OCI-LY7 (cell line): ENCODE measurements at regions of chr3 and their contacts with region 1.

Region 1: GRCh38 chr3:19348929-19349564 is 200.7 kb downstream of the KCNH8 start:
- DNase-seq: peak; percentile 77
- H3K4me3 ChIP-seq: no peak overlapping the region
- H3K27ac ChIP-seq: peak overlapping the region; percentile 61
- H3K4me1 ChIP-seq: peaks cover 47% of the 10 kb centered on the region
- CTCF ChIP-seq: peak; percentile 93

Region 2: GRCh38 chr3:19030522-19030839 is 318.6 kb before region 1 on chr3:
- CTCF ChIA-PET with region 1: no interaction called
- POLR2A ChIA-PET with region 1: no interaction called
- intact Hi-C with region 1: no loop called
- DNase-seq: peak; percentile 13
- H3K4me3 ChIP-seq: no peak overlapping the region
- H3K27ac ChIP-seq: no peak overlapping the region
- H3K4me1 ChIP-seq: no peaks in the 10 kb centered on the region
- CTCF ChIP-seq: peak; percentile 69

Region 3: DNA sequence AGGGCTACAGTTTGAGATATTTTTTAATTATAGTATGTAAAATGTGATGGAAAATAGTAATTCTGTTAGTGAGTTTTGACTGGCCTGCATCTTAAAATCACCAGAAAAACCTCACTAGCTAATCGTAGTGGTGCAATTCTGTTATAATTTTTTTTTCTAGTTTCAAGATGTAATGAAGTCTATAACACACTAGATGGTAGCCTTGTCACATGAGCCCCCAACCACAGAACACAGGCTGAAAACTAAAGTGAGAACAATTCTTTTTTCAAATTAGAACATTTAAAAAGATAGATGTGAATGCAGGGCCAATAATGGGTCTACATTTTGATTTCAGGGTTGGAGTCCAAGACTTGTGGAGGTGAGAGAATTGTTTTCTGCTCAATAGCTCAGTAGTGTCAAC is 284.0 kb before region 1 on chr3:
- CTCF ChIA-PET with region 1: no interaction called
- POLR2A ChIA-PET with region 1: no interaction called
- intact Hi-C with region 1: loop called (anchors 1 kb)
- DNase-seq: peak; percentile 36
- H3K4me3 ChIP-seq: no peak overlapping the region
- H3K27ac ChIP-seq: no peak overlapping the region
- H3K4me1 ChIP-seq: no peaks in the 10 kb centered on the region
- CTCF ChIP-seq: peak; percentile 83

Region 4: GRCh38 chr3:19146685-19147650 is 202.1 kb before region 1 on chr3:
- CTCF ChIA-PET with region 1: interaction called, 3 read pairs
- POLR2A ChIA-PET with region 1: interaction called, 4 read pairs
- intact Hi-C with region 1: loop called (anchors 5 kb)
- DNase-seq: peak; percentile 91
- H3K4me3 ChIP-seq: peak overlapping the region; percentile 72
- H3K27ac ChIP-seq: peak overlapping the region; percentile 68
- H3K4me1 ChIP-seq: peaks cover 11% of the 10 kb centered on the region
- CTCF ChIP-seq: peak; percentile 76

Region 5: GRCh38 chr3:19364148-19364547 is 15.1 kb after region 1 on chr3:
- CTCF ChIA-PET with region 1: no interaction called
- POLR2A ChIA-PET with region 1: interaction called, 18 read pairs
- intact Hi-C with region 1: no loop called
- DNase-seq: no peak
- H3K4me3 ChIP-seq: no peak overlapping the region
- H3K27ac ChIP-seq: no peak overlapping the region
- H3K4me1 ChIP-seq: peaks cover 14% of the 10 kb centered on the region
- CTCF ChIP-seq: no peak

Region 6: GRCh38 chr3:19399836-19400235 is 50.8 kb after region 1 on chr3:
- CTCF ChIA-PET with region 1: no interaction called
- POLR2A ChIA-PET with region 1: no interaction called
- intact Hi-C with region 1: loop called (anchors 10 kb)
- DNase-seq: no peak
- H3K4me3 ChIP-seq: no peak overlapping the region
- H3K27ac ChIP-seq: no peak overlapping the region
- H3K4me1 ChIP-seq: no peaks in the 10 kb centered on the region
- CTCF ChIP-seq: no peak

Region 7: DNA sequence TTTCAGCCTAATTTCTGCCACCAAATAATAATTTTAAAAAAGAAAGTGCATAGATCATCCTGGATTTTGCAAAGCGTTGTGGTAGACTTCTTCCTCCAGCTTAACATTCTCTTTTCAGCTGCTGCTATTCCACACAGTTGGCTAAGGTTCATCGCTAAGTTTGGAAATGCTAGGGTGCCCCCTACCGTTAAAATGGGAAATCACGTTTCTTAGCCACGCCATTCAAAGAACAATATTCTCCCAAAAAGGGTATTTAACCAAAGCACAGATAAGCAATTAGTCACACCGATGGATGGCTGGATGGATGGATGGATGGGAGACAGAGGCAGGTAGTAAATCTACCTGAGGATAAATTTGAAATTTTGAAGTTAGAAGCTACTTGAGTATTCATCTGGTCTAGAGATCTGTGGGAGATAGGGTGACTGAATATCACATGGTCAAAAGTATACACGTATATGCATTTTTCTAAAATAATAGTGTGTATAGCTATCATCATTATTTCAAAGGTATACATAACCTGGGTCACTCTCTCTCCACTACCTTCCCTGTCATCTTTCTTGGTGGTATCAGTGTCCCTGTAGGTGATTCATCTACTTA is 517.8 kb after region 1 on chr3:
- CTCF ChIA-PET with region 1: interaction called, 5 read pairs
- POLR2A ChIA-PET with region 1: interaction called, 6 read pairs
- intact Hi-C with region 1: loop called (anchors 1 kb)
- DNase-seq: peak; percentile 63
- H3K4me3 ChIP-seq: no peak overlapping the region
- H3K27ac ChIP-seq: no peak overlapping the region
- H3K4me1 ChIP-seq: no peaks in the 10 kb centered on the region
- CTCF ChIP-seq: peak; percentile 94

Region 8: DNA sequence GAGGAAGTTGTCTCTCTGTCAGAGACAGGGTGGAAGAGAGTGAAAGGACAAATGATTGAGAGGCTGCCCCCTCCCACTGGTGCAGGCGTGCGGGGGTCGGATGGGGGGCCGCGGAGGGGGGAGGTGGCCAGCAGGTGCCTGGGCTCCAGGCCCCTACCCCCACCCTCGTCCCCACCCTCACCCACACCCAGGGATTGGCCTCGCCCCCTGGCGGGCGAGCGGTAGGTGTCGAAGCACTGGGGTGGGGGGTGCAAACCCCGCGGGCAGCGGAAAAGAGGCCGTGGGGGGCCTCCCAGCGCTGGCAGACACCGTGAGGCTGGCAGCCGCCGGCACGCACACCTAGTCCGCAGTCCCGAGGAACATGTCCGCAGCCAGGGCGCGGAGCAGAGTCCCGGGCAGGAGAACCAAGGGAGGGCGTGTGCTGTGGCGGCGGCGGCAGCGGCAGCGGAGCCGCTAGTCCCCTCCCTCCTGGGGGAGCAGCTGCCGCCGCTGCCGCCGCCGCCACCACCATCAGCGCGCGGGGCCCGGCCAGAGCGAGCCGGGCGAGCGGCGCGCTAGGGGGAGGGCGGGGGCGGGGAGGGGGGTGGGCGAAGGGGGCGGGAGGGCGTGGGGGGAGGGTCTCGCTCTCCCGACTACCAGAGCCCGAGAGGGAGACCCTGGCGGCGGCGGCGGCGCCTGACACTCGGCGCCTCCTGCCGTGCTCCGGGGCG is 690.9 kb after region 1 on chr3 and contains the start of gene KAT2B:
- CTCF ChIA-PET with region 1: no interaction called
- POLR2A ChIA-PET with region 1: interaction called, 3 read pairs
- intact Hi-C with region 1: loop called (anchors 5 kb)
- DNase-seq: peak; percentile 93
- H3K4me3 ChIP-seq: peak within 1 kb of the TSS; percentile 94
- H3K27ac ChIP-seq: peak within 1 kb of the TSS; percentile 93
- H3K4me1 ChIP-seq: peaks cover 51% of the 10 kb centered on the region
- CTCF ChIP-seq: peak; percentile 78
- total RNA-seq, gene KAT2B: 19.2 and 24.2 TPM in 2 replicates